H1 (cell line): ENCODE measurements at regions of chr19 and their contacts with region 1.

Region 1: GRCh38 chr19:14117668-14118164 is at the start of gene PRKACA:
- DNase-seq: peak; percentile 91 to 95
- H3K4me3 ChIP-seq: peak within 1 kb of the TSS; percentile 41 to 85 (median 55)
- H3K27ac ChIP-seq: 0 out of 2 replicates have a peak within 1 kb of the TSS, but pooled peaks have one; percentile 29
- H3K4me1 ChIP-seq: peaks cover 8 to 26% (median 15%) of the 10 kb centered on the region in 4 experiments
- H3K27me3 ChIP-seq: no peaks in the 10 kb centered on the region; a peak in 2 of 7 replicates
- CTCF ChIP-seq: no peak
- EP300 ChIP-seq: no peak
- POLR2A ChIP-seq: no peak
- RAD21 ChIP-seq: no peak
- total RNA-seq, gene PRKACA: 48.2 and 52.8 TPM in 2 replicates

Region 2: DNA sequence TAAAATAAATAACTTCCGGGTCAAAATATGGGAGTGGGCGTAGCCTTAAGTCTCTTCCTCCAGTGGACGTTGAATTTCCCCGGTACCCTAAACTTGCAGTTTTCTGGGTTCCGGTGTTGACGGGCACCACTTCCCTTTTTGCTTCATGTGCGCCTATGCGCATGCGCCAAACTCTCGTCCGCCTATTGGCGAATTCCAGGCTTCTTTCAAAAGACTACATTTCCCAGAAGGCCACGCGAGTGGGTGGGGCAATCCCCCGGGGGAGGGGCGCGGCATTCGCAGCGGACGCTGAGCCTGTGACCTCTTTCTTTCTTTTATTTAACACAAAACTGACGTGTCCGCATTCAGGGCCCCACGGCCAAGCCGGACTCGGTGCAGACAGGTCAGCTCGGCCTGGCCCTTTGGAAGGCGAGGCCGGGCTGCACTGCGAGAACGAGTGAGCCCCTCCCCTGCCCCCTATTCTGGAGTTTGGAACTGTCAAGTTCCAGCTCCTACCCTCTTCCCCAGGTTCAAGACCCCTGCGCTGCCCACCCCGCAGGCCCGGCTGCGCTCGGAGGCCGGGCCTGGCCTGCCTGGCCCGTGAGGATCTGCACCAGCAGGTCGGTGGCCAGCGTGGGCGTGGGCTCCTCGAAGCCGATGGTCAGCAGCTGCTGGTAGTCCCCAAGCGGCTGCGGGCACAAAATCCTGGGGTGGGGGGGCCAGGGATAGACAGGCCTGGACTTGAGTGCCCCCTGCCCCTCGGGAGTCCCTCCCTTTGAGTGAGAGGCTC is 36.2 kb before region 1 on chr19:
- CTCF ChIA-PET with region 1: interaction called, 12 read pairs
- POLR2A ChIA-PET with region 1: interaction called, 4 read pairs
- DNase-seq: peak; percentile 97 to 100
- H3K4me3 ChIP-seq: peak overlapping the region; percentile 63 to 77 (median 70)
- H3K27ac ChIP-seq: no peak overlapping the region
- H3K4me1 ChIP-seq: peaks cover 0 to 3% (median 0%) of the 10 kb centered on the region in 4 experiments; a peak in 1 of 7 replicates
- H3K27me3 ChIP-seq: peaks cover 0 to 4% (median 0%) of the 10 kb centered on the region in 4 experiments; a peak in 3 of 7 replicates
- CTCF ChIP-seq: no peak
- EP300 ChIP-seq: no peak
- POLR2A ChIP-seq: no peak
- RAD21 ChIP-seq: no peak

Region 3: DNA sequence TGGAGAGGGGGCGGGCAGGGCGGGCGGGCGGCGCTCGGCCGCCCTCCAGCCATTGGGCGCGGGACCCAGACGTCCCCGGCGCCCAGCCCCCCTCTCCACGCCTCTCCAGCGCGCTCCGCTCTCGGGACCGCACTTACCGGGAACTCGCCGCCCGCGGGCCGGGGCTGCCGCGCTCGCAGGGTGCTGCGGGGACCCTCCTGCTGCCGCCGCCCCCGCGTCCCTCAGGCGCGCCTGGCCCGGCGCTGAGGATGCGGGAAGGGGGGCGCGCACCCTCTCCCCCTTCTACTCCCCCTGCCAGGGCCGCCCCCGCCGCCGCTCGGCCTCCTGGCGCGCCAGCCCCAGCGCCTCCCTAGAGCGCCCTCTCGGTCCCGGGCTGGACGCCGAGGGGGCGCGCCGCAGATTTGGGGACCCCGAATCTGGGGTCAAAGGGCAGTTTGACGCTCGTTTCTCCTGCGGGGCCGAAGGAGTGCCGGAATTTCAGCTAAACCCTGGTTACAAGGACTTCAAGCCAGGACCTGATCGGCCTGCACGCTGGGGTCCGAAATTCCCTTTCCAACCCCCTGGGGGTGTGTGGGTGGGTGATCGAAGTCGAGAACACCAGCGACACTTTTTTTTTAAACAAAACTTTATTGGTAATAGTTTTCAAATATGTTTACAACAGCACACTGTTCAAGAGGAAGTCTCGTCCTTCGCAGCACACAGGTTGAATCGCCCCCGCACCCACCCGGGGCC is 26.5 kb before region 1 on chr19:
- CTCF ChIA-PET with region 1: interaction called, 105 read pairs
- POLR2A ChIA-PET with region 1: interaction called, 5 read pairs
- DNase-seq: peak in 1 of 2 experiments; percentile 76
- H3K4me3 ChIP-seq: peak overlapping the region; percentile 48 to 83 (median 63)
- H3K27ac ChIP-seq: no peak overlapping the region
- H3K4me1 ChIP-seq: peaks cover 3 to 5% (median 4%) of the 10 kb centered on the region in 4 experiments
- H3K27me3 ChIP-seq: peaks cover 0 to 6% (median 2%) of the 10 kb centered on the region in 4 experiments; a peak in 4 of 7 replicates
- CTCF ChIP-seq: no peak
- EP300 ChIP-seq: no peak
- POLR2A ChIP-seq: no peak
- RAD21 ChIP-seq: no peak

Region 4: DNA sequence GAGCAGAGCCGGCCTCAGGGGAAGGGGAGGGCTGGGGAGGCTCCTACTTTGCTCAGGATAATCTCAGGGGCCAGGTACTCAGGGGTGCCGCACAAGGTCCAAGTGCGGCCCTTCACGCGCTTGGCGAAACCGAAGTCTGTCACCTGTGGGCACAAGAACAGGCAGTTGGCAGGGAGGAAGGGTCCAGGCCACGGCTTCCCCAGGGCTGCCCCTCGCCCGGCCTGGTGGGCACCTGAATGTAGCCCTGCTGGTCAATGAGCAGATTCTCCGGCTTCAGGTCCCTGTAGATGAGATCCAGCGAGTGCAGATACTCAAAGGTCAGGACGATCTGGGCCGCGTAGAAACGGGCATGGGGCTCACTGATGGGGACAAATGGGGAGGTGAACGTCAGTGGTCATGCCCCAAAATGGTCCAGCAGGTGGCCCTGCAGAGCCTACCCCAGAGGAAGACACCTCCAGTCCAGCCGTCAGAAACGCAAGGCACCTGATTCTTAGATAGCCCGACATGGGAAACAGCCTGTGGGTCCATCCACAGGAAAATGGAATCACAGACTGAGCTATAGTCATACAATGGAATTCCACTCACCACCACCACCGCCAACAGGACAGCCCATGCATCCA is 20.1 kb before region 1 on chr19:
- CTCF ChIA-PET with region 1: interaction called, 105 read pairs
- POLR2A ChIA-PET with region 1: interaction called, 6 read pairs
- DNase-seq: no peak
- H3K4me3 ChIP-seq: no peak overlapping the region
- H3K27ac ChIP-seq: no peak overlapping the region
- H3K4me1 ChIP-seq: peaks cover 0 to under 1% (median 0%) of the 10 kb centered on the region in 4 experiments; a peak in 1 of 7 replicates
- H3K27me3 ChIP-seq: no peaks in the 10 kb centered on the region; a peak in 2 of 7 replicates
- CTCF ChIP-seq: peak; percentile 57 to 64 (median 62)
- EP300 ChIP-seq: no peak
- POLR2A ChIP-seq: no peak
- RAD21 ChIP-seq: peak; percentile 50 to 65

Region 5: GRCh38 chr19:14103310-14103709 is 14.4 kb before region 1 on chr19:
- CTCF ChIA-PET with region 1: interaction called, 105 read pairs
- POLR2A ChIA-PET with region 1: interaction called, 6 read pairs
- DNase-seq: no peak
- H3K4me3 ChIP-seq: no peak overlapping the region
- H3K27ac ChIP-seq: no peak overlapping the region
- H3K4me1 ChIP-seq: no peaks in the 10 kb centered on the region
- H3K27me3 ChIP-seq: no peaks in the 10 kb centered on the region
- CTCF ChIP-seq: no peak
- EP300 ChIP-seq: no peak
- POLR2A ChIP-seq: no peak
- RAD21 ChIP-seq: no peak

Region 6: GRCh38 chr19:14127929-14128509 is 10.3 kb after region 1 on chr19:
- CTCF ChIA-PET with region 1: interaction called, 40 read pairs
- POLR2A ChIA-PET with region 1: interaction called, 109 read pairs
- DNase-seq: no peak
- H3K4me3 ChIP-seq: no peak overlapping the region
- H3K27ac ChIP-seq: no peak overlapping the region
- H3K4me1 ChIP-seq: no peaks in the 10 kb centered on the region
- H3K27me3 ChIP-seq: no peaks in the 10 kb centered on the region
- CTCF ChIP-seq: no peak
- EP300 ChIP-seq: no peak
- POLR2A ChIP-seq: no peak
- RAD21 ChIP-seq: no peak

Region 7: GRCh38 chr19:14136509-14137281 is 19.0 kb after region 1 on chr19 and contains the start of gene ASF1B:
- CTCF ChIA-PET with region 1: interaction called, 40 read pairs
- POLR2A ChIA-PET with region 1: interaction called, 109 read pairs
- DNase-seq: peak; percentile 96 to 97
- H3K4me3 ChIP-seq: peak within 1 kb of the TSS; percentile 75 to 86 (median 80)
- H3K27ac ChIP-seq: peak within 1 kb of the TSS; percentile 78
- H3K4me1 ChIP-seq: peaks cover 2 to 11% (median 5%) of the 10 kb centered on the region in 4 experiments
- H3K27me3 ChIP-seq: no peaks in the 10 kb centered on the region
- CTCF ChIP-seq: peak; percentile 37 to 63 (median 55)
- EP300 ChIP-seq: no peak
- POLR2A ChIP-seq: peak; percentile 71 to 93
- RAD21 ChIP-seq: peak; percentile 70 to 75
- total RNA-seq, gene ASF1B: 32.1 and 32.6 TPM in 2 replicates

Region 8: DNA sequence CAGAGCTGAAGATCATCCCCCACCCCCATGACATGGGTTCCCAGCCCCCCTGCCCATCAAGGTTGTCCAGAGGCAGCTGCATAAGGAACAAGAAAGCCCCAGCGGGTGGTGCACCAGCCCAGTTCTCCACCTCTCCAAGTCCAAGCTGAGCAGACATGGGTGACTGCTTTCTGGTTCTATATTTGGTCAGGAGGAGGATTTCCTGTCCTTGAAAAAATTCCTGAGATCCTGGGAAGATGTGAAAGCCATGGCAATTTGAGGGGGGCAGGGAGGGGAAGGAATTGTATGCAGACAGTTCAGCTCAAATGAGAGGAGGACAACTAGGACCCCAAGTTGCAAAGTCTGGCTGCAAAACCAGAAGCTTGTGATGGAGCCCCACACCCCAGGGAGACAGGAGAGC is 208.1 kb after region 1 on chr19:
- CTCF ChIA-PET with region 1: no interaction called
- POLR2A ChIA-PET with region 1: no interaction called
- DNase-seq: no peak
- H3K4me3 ChIP-seq: no peak overlapping the region
- H3K27ac ChIP-seq: no peak overlapping the region
- H3K4me1 ChIP-seq: no peaks in the 10 kb centered on the region
- H3K27me3 ChIP-seq: no peaks in the 10 kb centered on the region
- CTCF ChIP-seq: no peak
- EP300 ChIP-seq: no peak
- POLR2A ChIP-seq: no peak
- RAD21 ChIP-seq: no peak